A673 (cell line): ENCODE measurements at regions of chr14 and their contacts with region 1.

Region 1: GRCh38 chr14:86462193-86462753 is 932.3 kb downstream of the FLRT2 start:
- DNase-seq: peak; percentile 46
- H3K4me3 ChIP-seq: no peak overlapping the region
- H3K27ac ChIP-seq: no peak overlapping the region
- H3K4me1 ChIP-seq: peaks cover 10% of the 10 kb centered on the region
- H3K27me3 ChIP-seq: no peaks in the 10 kb centered on the region
- CTCF ChIP-seq: 0 out of 2 replicates have a peak, but pooled peaks have one; percentile 39

Region 2: GRCh38 chr14:86662334-86662733 is 200.1 kb after region 1 on chr14:
- CTCF ChIA-PET with region 1: no interaction called
- POLR2A ChIA-PET with region 1: no interaction called
- intact Hi-C with region 1: loop called (anchors 5 kb)
- DNase-seq: no peak
- H3K4me3 ChIP-seq: no peak overlapping the region
- H3K27ac ChIP-seq: no peak overlapping the region
- H3K4me1 ChIP-seq: peaks cover 8% of the 10 kb centered on the region
- H3K27me3 ChIP-seq: no peaks in the 10 kb centered on the region
- CTCF ChIP-seq: no peak

Region 3: DNA sequence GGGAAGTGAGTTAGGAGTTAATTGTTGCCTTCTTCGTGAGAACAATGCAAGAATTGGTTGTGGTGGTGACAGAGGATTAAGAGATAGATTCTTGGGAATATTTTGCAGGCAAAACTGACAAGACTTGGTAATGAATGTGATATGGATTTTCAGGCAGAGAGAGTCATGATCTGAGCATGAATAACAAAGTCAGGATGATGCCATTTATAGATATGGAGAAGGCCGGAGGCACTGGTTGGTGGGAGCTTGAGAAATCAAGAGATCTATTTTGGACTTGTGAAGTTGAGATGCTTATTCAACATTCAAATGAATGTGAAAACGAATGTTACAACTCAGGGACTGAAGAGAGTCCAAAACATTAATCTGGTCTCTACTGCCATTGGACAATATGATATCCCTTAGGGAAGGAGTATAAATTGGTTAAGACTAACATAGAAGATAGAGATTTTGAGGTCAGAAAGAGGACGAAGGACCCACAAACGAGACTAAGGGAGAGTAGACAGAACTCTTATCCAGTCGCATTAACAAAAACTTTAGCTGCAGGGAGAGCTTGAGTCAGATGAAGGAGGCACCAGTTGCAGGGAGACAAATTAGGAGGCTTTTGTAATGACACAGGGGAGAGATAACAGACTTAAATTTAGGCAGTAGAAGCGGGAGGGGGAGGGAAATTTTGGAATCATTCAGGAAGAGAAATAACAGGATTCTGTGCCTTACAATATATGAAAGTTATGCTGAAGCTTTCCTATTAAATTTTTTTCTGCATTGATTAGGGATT is 440.1 kb after region 1 on chr14:
- CTCF ChIA-PET with region 1: no interaction called
- POLR2A ChIA-PET with region 1: no interaction called
- intact Hi-C with region 1: loop called (anchors 5 kb)
- DNase-seq: no peak
- H3K4me3 ChIP-seq: no peak overlapping the region
- H3K27ac ChIP-seq: no peak overlapping the region
- H3K4me1 ChIP-seq: no peaks in the 10 kb centered on the region
- H3K27me3 ChIP-seq: no peaks in the 10 kb centered on the region
- CTCF ChIP-seq: no peak